Heart left ventricle (tissue), 16 donors: ENCODE measurements at regions of chr1 and their contacts with region 1.

Region 1: DNA sequence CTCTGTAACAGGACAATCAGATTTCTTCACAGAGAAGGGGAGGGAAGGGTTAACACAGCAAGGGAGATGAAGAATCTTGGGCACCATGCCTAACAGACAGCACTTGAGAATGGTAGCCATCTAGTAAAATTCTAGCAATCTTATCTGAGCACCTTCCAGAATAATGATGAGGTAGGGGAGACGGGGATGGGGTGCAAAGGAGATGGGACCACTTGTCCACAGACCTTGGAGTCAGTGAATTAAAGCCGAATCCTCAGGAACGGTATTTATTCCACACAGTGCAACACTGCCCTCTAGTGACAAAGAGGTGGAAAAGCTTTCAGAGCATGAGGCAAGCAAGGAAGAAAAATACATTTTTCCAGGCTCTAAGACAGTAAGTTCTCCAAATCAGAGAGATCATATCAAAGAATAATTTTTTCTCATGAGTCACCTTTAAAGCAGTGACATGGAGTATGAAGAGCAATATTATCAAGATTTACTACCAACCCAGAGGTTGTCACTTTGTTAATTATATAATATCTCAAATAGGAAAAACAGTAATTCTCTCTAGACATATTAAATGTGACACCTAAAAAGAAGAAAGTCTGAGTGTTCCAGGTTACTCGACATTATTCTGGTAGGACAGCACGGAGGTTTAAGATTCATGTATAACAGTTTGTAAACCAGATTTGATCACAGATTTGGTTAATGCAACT is 43.3 kb upstream of the LPAR3 start:
- DNase-seq: peak in 1 of 5 donors; percentile 29
- ATAC-seq: peak in 3 of 4 donors; percentile 73 to 80 (median 79)
- H3K4me3 ChIP-seq: no peak overlapping the region
- H3K27ac ChIP-seq: no peak overlapping the region
- H3K4me1 ChIP-seq: no peaks in the 10 kb centered on the region
- H3K27me3 ChIP-seq: peaks cover 0 to 6% (median 0%) of the 10 kb centered on the region in 9 donors
- CTCF ChIP-seq: peak; percentile 86 to 95 (median 92)
- POLR2A ChIP-seq: no peak

Region 2: GRCh38 chr1:83905315-83905907 is 1030.9 kb before region 1 on chr1:
- intact Hi-C with region 1: loop called in 1 of 10 experiments (anchors 10 kb)
- DNase-seq: no peak
- ATAC-seq: no peak
- H3K4me3 ChIP-seq: no peak overlapping the region
- H3K27ac ChIP-seq: no peak overlapping the region
- H3K4me1 ChIP-seq: peaks cover 0 to 3% (median 0%) of the 10 kb centered on the region in 12 donors
- H3K27me3 ChIP-seq: no peaks in the 10 kb centered on the region
- CTCF ChIP-seq: peak; percentile 50 to 78 (median 64)
- POLR2A ChIP-seq: no peak

Region 3: DNA sequence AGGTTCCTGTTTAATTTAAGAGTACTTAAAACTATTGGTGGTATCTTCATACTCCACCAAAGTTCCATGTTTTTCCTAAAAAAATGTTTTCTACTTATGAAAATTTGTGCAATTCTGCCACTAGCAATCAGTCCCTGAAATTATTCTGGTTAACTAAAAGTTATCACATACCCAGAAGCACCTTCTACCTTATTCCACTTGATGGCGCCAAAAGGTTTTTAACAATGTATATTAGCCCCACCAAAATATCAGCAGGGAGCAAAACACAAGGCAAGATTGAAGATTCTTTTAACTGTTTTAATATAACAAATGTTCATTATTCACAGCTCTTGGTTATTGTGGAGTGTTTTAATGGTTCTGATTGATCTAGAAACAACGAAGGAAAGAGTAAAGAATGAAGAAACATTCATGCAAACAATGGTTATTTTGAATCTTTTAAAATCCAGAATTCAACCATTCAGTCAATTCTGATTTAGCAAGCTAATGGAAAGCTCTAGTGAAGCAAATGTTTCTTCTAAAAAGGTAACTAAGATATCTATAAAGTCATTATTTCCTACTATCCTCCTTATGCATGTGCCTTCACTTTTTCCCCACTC is 1004.5 kb before region 1 on chr1:
- intact Hi-C with region 1: loop called in 1 of 10 experiments (anchors 10 kb)
- DNase-seq: peak in 1 of 5 donors; percentile 10
- ATAC-seq: peak; percentile 58 to 80 (median 66)
- H3K4me3 ChIP-seq: no peak overlapping the region
- H3K27ac ChIP-seq: no peak overlapping the region
- H3K4me1 ChIP-seq: peaks cover 0 to 5% (median 0%) of the 10 kb centered on the region in 12 donors
- H3K27me3 ChIP-seq: no peaks in the 10 kb centered on the region
- CTCF ChIP-seq: peak; percentile 56 to 76 (median 68)
- POLR2A ChIP-seq: no peak

Region 4: GRCh38 chr1:84433258-84434080 is 502.8 kb before region 1 on chr1:
- intact Hi-C with region 1: loop called in 2 of 10 experiments (anchors 10 kb)
- DNase-seq: peak in 3 of 5 donors; percentile 29 to 41 (median 40)
- ATAC-seq: peak; percentile 69 to 86 (median 75)
- H3K4me3 ChIP-seq: peak overlapping the region in 10 of 12 donors; percentile 17 to 45 (median 34)
- H3K27ac ChIP-seq: no peak overlapping the region
- H3K4me1 ChIP-seq: peaks cover 0 to 47% (median 6%) of the 10 kb centered on the region in 12 donors
- H3K27me3 ChIP-seq: no peaks in the 10 kb centered on the region
- CTCF ChIP-seq: peak; percentile 53 to 82 (median 72)
- POLR2A ChIP-seq: no peak

Region 5: GRCh38 chr1:84442256-84442655 is 494.0 kb before region 1 on chr1:
- intact Hi-C with region 1: loop called in 4 of 10 experiments (anchors 10 kb)
- DNase-seq: no peak
- ATAC-seq: peak; percentile 51 to 78 (median 74)
- H3K4me3 ChIP-seq: no peak overlapping the region
- H3K27ac ChIP-seq: peak overlapping the region in 1 of 12 donors; percentile 44
- H3K4me1 ChIP-seq: peaks cover 0 to 22% (median 0%) of the 10 kb centered on the region in 12 donors
- H3K27me3 ChIP-seq: peaks cover 0 to 12% (median 0%) of the 10 kb centered on the region in 9 donors
- CTCF ChIP-seq: peak; percentile 7 to 61 (median 46)
- POLR2A ChIP-seq: no peak

Region 6: DNA sequence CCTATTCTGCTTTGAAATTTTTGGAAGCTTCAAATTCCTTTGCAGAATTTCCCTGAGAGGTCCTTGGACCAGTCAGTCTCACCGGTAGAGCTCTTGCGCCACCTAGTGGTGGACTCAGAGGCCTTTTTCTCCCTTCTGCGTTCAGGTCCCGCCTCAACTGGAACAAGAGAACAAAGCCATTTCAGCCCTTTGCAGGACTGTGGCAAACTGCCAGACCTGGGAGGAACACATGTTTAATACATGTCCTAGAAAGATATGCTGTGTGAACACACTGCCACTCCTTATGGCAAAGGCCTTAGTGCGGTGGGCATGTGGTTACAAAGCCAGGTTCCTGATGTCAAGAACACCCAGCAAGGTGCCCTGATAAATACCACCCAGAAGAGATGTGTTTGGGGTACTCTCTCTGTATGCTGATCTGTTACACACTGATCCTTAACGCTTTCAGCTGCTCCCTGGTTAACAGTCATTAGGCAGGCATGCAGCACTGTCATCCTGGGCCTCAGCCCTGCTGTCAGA is 163.8 kb before region 1 on chr1:
- intact Hi-C with region 1: loop called in 8 of 10 experiments (anchors 2 to 10 kb)
- DNase-seq: peak; percentile 73 to 79 (median 76)
- ATAC-seq: peak; percentile 78 to 91 (median 88)
- H3K4me3 ChIP-seq: no peak overlapping the region
- H3K27ac ChIP-seq: no peak overlapping the region
- H3K4me1 ChIP-seq: peaks cover 0 to 3% (median 0%) of the 10 kb centered on the region in 12 donors
- H3K27me3 ChIP-seq: peaks cover 0 to 8% (median 0%) of the 10 kb centered on the region in 9 donors
- CTCF ChIP-seq: peak; percentile 82 to 96 (median 94)
- POLR2A ChIP-seq: no peak

Region 7: DNA sequence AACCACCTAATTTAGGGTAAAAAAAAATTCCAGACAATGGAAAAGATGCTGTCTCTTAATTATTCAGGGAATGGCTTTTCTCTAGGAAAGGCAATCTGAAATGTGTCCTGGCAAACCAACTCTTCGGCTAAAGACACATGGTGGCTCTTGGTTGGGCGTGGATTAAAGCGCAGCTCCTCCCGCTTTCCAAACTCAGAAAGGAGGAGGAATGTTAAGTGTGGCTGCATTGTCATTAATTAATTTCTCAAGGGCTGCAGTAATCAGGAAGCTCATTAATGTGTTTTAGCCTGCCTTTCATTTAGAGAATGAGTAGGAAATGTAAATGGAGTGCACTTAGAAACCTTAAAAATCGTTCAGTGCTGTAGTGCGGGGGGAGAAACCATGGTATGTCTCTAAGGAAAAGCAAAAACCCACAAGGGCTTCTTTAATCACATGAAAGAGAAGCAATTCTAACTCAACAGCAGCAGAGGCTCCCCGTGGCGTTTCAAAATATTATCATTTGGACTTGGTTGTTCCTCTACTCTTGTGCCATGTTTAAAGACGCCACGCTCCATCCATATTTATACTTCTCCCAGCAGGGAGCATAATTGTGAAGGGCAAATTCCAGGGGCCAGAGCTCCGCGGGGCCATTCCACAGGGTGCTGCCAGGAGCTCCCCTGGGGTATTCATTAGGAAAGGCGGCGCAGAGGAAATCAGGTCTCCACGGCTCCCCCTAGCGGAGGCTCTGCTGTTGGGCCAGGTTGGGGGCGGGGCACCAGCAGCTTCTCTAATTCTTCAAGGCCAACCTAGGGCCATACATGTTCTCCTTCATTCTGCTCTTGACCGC is 154.1 kb before region 1 on chr1:
- intact Hi-C with region 1: loop called in 6 of 10 experiments (anchors 5 to 10 kb)
- DNase-seq: peak; percentile 41 to 75 (median 62)
- ATAC-seq: peak; percentile 33 to 80 (median 70)
- H3K4me3 ChIP-seq: no peak overlapping the region
- H3K27ac ChIP-seq: no peak overlapping the region
- H3K4me1 ChIP-seq: no peaks in the 10 kb centered on the region
- H3K27me3 ChIP-seq: no peaks in the 10 kb centered on the region
- CTCF ChIP-seq: peak; percentile 39 to 68 (median 56)
- POLR2A ChIP-seq: no peak

Region 8: DNA sequence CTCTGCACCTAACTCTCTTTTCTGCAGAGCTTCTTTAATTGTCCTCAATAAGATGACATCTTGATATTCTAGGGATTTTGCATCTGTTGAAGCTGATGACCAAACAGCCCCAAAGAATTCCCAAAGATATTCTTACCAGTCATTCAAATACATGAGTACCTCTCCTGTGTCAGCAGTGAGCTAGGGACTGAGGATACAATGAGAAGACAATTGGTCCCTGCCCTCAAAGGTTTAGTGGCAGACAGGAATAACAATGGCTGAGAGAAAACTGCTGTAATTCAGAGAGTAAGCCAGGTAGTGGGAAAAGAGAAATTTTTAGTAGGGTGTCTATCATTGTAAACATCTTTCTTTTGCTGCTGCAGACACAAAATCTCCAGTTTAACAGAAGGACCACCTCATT is 106.2 kb after region 1 on chr1:
- intact Hi-C with region 1: no loop called
- DNase-seq: no peak
- ATAC-seq: no peak
- H3K4me3 ChIP-seq: no peak overlapping the region
- H3K27ac ChIP-seq: no peak overlapping the region
- H3K4me1 ChIP-seq: peaks cover 0 to 5% (median 0%) of the 10 kb centered on the region in 12 donors
- H3K27me3 ChIP-seq: peaks cover 0 to 51% (median 10%) of the 10 kb centered on the region in 9 donors
- CTCF ChIP-seq: no peak
- POLR2A ChIP-seq: no peak